ENCODE measurements at regions of chr5 and their contacts with region 1.

Region 1: GRCh38 chr5:137507150-137507549 is 8.0 kb upstream of the SPOCK1 start:
- DNase-seq: no peak
- H3K4me3 ChIP-seq: no peak overlapping the region
- H3K27ac ChIP-seq: no peak overlapping the region
- H3K4me1 ChIP-seq: no peaks in the 10 kb centered on the region
- H3K27me3 ChIP-seq: peaks cover 2% of the 10 kb centered on the region
- CTCF ChIP-seq: no peak

Region 2: GRCh38 chr5:137605411-137605810 is 98.3 kb after region 1 on chr5:
- CTCF ChIA-PET with region 1: interaction called, 10 read pairs
- dilution Hi-C with region 1: no loop called
- in situ Hi-C with region 1: no loop called
- intact Hi-C with region 1: no loop called
- DNase-seq: peak; percentile 8
- H3K4me3 ChIP-seq: no peak overlapping the region
- H3K27ac ChIP-seq: no peak overlapping the region
- H3K4me1 ChIP-seq: no peaks in the 10 kb centered on the region
- H3K27me3 ChIP-seq: peaks cover 2% of the 10 kb centered on the region
- CTCF ChIP-seq: peak; percentile 18 to 46